HEK293 (cell line): ENCODE measurements at regions of chr12 and their contacts with region 1.

Region 1: GRCh38 chr12:57124259-57124877 is 3.9 kb upstream of the LRP1 start:
- H3K4me3 ChIP-seq: no peak overlapping the region
- H3K27ac ChIP-seq: no peak overlapping the region
- H3K4me1 ChIP-seq: peaks cover 10% of the 10 kb centered on the region
- CTCF ChIP-seq: peak; percentile 62; the same call in 1 of the 2 replicates

Region 2: GRCh38 chr12:57069523-57069922 is 54.8 kb before region 1 on chr12:
- CTCF ChIA-PET with region 1: interaction called, 22 read pairs
- POLR2A ChIA-PET with region 1: interaction called, 6 read pairs
- H3K4me3 ChIP-seq: no peak overlapping the region
- H3K27ac ChIP-seq: no peak overlapping the region
- H3K4me1 ChIP-seq: no peaks in the 10 kb centered on the region
- CTCF ChIP-seq: peak; percentile 69

Region 3: GRCh38 chr12:57088459-57089248 is 35.7 kb before region 1 on chr12 and contains the start of gene NAB2:
- CTCF ChIA-PET with region 1: interaction called, 8 read pairs
- POLR2A ChIA-PET with region 1: interaction called, 11 read pairs
- H3K4me3 ChIP-seq: peak within 1 kb of the TSS; percentile 84
- H3K27ac ChIP-seq: peak within 1 kb of the TSS; percentile 80
- H3K4me1 ChIP-seq: peaks cover 12% of the 10 kb centered on the region
- CTCF ChIP-seq: no peak; the same call in 1 of the 2 replicates

Region 4: DNA sequence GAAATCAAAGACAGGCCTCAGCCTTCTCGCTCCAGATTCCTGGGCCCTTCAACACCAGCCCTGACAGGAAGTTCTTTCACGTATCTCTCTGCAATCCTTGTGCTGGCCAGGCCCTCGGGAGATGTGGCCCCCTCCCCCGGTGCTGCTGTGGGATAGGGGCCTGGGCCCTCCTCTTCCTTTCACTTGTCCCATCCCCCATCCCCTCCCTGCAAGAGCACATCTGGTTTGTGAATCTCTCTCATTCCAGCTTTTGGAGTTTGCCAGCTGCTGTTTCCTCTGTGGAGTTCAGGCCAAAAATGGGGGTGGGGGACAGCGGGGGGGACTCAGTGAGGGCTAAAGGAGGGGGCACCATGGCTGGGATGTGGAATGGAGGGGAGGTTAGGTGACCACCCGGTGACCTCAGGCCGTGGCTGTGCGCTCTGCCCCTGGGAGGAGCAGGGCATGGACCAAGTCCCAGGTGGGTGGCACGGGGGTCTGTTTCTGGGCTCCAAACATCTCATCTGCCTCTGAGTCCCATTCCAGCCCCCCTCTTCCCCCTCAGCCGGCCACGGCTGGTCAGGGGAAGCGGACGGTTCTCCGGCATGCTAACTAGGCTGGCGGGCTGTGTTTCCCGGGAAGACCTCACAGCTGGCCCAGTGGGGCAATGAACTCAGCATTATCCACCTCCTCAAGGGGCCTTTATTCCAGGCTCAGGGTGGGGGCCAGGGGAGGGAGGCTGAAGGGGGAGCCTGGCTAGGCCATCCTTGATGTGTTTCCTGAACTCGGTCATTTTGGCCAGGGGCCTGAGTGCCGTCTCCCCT is 11.4 kb after region 1 on chr12:
- CTCF ChIA-PET with region 1: interaction called, 10 read pairs
- POLR2A ChIA-PET with region 1: interaction called, 10 read pairs
- H3K4me3 ChIP-seq: no peak overlapping the region
- H3K27ac ChIP-seq: no peak overlapping the region
- H3K4me1 ChIP-seq: no peaks in the 10 kb centered on the region; the same call in 1 of the 2 replicates
- CTCF ChIP-seq: no peak

Region 5: DNA sequence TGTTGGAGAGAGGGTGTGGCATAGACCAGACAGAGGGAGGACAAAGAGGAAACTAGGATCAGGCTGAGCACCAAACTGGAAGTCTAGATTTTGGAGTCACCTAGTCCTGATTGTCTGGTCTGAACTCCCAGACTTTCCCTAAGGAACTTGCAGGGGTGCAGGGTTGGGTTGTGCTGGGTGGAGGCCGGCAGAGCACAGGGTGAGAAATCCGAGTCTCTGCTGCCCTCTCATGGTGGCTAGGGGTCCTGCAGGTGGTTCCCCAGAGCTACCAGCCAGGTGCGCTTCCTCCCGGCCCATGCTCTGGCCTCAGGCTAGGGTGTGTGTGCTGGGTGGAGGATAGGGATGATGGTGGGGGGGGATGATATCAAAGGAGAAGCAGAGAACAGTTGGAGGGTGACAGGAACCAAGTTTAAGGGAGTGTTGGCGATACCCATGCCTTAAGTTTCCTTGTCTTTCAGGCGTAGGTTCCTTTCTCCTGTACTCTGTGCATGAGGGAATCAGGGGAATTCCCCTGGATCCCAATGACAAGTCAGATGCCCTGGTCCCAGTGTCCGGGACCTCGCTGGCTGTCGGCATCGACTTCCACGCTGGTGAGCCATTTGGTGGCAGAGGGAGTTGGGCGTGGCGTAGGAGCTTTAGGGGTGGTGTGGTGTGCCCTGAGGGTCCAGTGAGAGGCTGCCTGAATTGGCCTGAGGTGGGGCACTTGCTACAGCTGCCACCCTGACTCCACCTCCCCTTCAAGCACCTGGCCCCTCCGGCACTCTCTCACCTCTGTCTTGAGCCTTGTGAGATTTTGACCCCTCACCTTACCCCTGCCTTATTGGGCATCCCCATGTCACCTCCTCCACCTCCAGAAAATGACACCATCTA is 58.8 kb after region 1 on chr12:
- CTCF ChIA-PET with region 1: interaction called, 141 read pairs
- POLR2A ChIA-PET with region 1: interaction called, 8 read pairs
- H3K4me3 ChIP-seq: no peak overlapping the region
- H3K27ac ChIP-seq: no peak overlapping the region
- H3K4me1 ChIP-seq: no peaks in the 10 kb centered on the region
- CTCF ChIP-seq: peak; percentile 91